Testis (tissue), 5 donors: ENCODE measurements at regions of chr14 and their contacts with region 1.

Region 1: DNA sequence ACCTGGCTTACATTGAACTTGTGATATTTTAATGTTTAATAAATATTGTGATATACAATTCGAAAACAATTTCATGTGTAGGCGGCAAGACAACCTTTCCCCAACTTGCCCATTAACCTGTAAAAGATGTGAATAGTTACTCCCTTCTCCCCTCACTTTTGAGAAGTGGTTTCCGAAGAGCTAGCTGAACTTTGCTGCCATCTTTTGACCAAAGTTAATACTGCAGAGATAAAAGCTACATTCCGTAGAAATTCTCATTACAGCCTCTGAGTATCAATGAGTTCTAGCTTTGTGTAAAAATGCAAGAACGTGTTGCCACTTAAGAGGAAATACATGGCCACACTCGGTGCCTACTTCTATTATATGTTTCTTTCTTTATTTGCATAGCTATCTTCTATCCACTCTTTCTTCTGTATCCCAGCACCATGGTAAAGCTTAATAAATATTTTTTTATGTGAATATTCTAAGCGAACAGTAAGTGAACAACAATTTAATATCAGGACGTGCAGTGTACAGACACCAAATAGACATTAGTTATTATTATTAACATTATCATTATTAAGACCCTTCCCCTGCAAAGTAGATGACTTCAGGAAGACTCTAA is 105.1 kb upstream of the TMEM260 start:
- DNase-seq: no peak
- H3K4me3 ChIP-seq: no peak overlapping the region
- H3K27ac ChIP-seq: no peak overlapping the region
- H3K4me1 ChIP-seq: no peaks in the 10 kb centered on the region
- H3K27me3 ChIP-seq: no peaks in the 10 kb centered on the region
- CTCF ChIP-seq: peak; percentile 51 to 76 (median 71)
- POLR2A ChIP-seq: no peak

Region 2: DNA sequence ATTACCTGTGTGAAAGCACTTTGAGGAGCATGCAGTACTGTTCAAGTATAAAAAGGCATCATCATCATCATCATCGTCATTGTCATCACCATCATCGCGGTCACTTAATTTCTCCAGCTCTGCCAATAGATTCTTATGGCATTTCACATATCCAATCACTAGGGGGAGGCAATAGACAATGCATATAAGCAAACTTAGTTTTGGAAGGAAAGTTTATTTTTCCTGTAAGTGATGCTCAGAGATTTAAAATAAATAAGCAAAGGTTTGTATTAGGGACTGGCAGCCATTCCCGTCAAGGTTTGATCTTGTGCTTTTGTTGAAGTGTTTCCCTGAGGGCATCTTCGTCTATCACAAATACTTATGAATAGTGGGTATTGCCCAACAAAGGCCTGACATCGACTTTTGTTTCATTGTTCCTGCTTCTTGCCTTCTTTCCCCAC is 767.1 kb before region 1 on chr14:
- intact Hi-C with region 1: loop called (anchors 10 kb)
- DNase-seq: no peak
- H3K4me3 ChIP-seq: no peak overlapping the region
- H3K27ac ChIP-seq: no peak overlapping the region
- H3K4me1 ChIP-seq: no peaks in the 10 kb centered on the region
- H3K27me3 ChIP-seq: no peaks in the 10 kb centered on the region
- CTCF ChIP-seq: peak; percentile 67 to 72 (median 69)
- POLR2A ChIP-seq: no peak

Region 3: GRCh38 chr14:55976219-55976618 is 498.3 kb before region 1 on chr14:
- intact Hi-C with region 1: no loop called
- DNase-seq: no peak
- H3K4me3 ChIP-seq: no peak overlapping the region
- H3K27ac ChIP-seq: no peak overlapping the region
- H3K4me1 ChIP-seq: peaks cover 11% of the 10 kb centered on the region
- H3K27me3 ChIP-seq: no peaks in the 10 kb centered on the region
- CTCF ChIP-seq: no peak
- POLR2A ChIP-seq: no peak